AG04450 (cell line): ENCODE measurements at regions of chr17 and their contacts with region 1.

Region 1: GRCh38 chr17:19001907-19002590 is 2.5 kb downstream of the FAM83G start:
- DNase-seq: no peak
- H3K4me3 ChIP-seq: peak overlapping the region; percentile 73
- H3K27ac ChIP-seq: no peak overlapping the region
- H3K27me3 ChIP-seq: no peaks in the 10 kb centered on the region
- CTCF ChIP-seq: no peak

Region 2: GRCh38 chr17:18933102-18934058 is 68.7 kb before region 1 on chr17:
- CTCF ChIA-PET with region 1: no interaction called
- POLR2A ChIA-PET with region 1: interaction called, 11 read pairs
- DNase-seq: no peak
- H3K4me3 ChIP-seq: no peak overlapping the region
- H3K27ac ChIP-seq: no peak overlapping the region
- H3K27me3 ChIP-seq: no peaks in the 10 kb centered on the region
- CTCF ChIP-seq: no peak